Activated CD4-positive, alpha-beta T cell treated with anti-CD3 and anti-CD28 coated beads, Interleukin-2, amount 10 ng/mL, durations not matched to agents 24 days and 14 days (primary cell): ENCODE measurements at regions of chr7 and their contacts with region 1.

Region 1: DNA sequence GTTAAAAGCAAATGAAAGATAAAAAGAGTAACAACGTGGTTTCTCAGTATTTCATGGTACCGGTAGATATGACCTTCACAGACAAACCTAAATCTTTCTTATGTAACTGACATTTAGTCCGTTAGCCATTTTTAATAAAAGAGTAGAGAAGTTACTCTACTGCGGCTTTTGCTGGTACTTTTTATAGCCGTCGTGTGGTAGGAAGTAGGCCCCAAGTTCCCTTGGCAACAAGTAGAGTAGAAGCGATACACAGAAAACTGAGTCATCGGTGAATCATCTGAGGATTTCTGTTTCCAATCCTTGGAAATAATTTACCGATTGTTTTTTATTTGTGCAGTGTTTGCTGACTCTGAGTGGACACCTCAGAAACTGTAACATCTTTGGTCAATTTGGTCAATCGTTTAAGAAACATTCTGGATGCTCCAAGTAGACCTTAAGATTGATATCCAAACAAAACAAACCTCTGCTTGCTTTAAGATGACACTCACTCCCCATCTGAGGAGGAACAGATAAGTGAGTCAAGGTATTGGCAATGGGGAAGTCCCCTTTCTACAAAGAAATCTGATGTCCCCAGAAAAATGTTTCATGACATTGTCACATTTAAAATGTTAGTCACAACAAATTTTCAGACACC is 63.9 kb upstream of the AHR start:
- DNase-seq: peak; percentile 91
- H3K4me3 Mint-ChIP-seq: peak overlapping the region; percentile 81
- H3K27ac Mint-ChIP-seq: peak overlapping the region; percentile 97
- H3K4me1 Mint-ChIP-seq: peaks cover 35% of the 10 kb centered on the region
- H3K27me3 Mint-ChIP-seq: no peaks in the 10 kb centered on the region

Region 2: DNA sequence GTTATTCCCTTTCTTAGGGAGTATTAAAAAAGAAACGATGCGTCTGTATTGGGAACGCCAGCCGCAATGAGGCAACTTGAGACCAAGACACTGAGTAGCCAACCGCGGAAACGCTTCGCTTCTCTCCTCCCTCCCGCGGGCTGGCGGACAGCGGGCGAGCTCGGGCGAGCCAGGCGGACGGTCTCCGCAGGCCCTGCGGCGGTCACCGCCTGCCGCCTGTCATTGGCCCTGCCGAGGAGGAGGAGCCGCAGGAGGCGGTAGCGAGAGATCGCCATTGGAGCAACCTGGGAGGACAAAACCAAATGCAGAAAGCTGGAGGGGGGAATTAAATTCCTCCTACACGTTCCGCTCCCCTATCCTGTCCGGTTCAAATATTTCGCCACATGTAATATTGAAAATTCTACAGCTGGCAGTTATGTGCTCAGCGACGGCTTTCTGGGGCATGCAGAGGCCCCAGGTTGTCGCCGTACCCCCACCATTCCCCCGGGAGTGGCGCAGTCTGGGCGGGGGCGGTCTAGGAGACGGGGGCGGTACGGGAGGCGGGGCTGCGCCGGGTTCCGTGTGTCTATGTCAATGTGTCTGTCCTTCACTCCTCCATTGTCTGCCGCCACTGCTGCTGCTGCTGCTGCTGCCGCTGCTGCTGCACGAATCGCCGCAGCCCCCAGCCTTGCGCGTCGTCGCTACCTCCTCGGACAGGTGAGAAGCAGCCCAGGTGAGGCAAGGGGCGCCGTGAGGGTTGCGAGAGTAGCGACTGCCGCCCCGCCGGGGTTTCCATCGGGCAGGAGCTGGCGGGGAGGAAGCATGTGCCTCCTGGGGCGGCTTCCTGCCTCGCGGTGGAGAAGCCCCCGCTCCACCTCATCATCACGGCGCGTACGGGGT is 588.7 kb before region 1 on chr7 and contains the starts of genes ANKMY2 and BZW2:
- intact Hi-C with region 1: loop called (anchors 1 kb)
- DNase-seq: peak; percentile 98
- H3K4me3 Mint-ChIP-seq: peak within 1 kb of the TSS; percentile 93
- H3K27ac Mint-ChIP-seq: peak within 1 kb of the TSS; percentile 99
- H3K4me1 Mint-ChIP-seq: peaks cover 54% of the 10 kb centered on the region
- H3K27me3 Mint-ChIP-seq: no peaks in the 10 kb centered on the region
- total RNA-seq, gene ANKMY2: 8.0 and 8.7 TPM in 2 replicates
- total RNA-seq, gene BZW2: 104 and 113 TPM in 2 replicates

Region 3: GRCh38 chr7:16999541-17000267 is 234.8 kb before region 1 on chr7:
- intact Hi-C with region 1: loop called (anchors 1 kb)
- DNase-seq: peak; percentile 76
- H3K4me3 Mint-ChIP-seq: peak overlapping the region; percentile 63
- H3K27ac Mint-ChIP-seq: peak overlapping the region; percentile 84
- H3K4me1 Mint-ChIP-seq: peaks cover 15% of the 10 kb centered on the region
- H3K27me3 Mint-ChIP-seq: peaks cover 6% of the 10 kb centered on the region

Region 4: DNA sequence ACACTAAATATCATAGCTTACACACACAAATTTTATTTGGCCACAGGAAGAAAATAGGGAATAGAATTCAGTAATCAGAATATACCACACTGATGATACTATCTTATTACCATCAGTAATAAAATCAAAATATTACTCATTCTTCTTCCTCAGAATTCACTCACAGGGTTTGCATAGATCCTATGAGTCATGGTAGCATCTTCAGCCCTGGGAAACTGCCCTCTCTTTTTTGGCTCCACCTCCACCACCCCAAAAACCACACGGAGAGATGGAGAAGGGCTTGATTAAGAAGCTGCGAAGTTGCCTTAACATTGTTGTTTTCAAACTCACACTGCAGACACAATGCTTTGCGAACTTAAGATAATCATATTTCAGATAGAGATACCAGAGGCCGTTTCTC is 90.2 kb before region 1 on chr7:
- intact Hi-C with region 1: loop called (anchors 1 kb)
- DNase-seq: peak; percentile 87
- H3K4me3 Mint-ChIP-seq: peak overlapping the region; percentile 54
- H3K27ac Mint-ChIP-seq: peak overlapping the region; percentile 81
- H3K4me1 Mint-ChIP-seq: peaks cover 49% of the 10 kb centered on the region
- H3K27me3 Mint-ChIP-seq: peaks cover 2% of the 10 kb centered on the region

Region 5: GRCh38 chr7:17255926-17256325 is 21.4 kb after region 1 on chr7:
- intact Hi-C with region 1: loop called (anchors 1 kb)
- DNase-seq: no peak
- H3K4me3 Mint-ChIP-seq: no peak overlapping the region
- H3K27ac Mint-ChIP-seq: no peak overlapping the region
- H3K4me1 Mint-ChIP-seq: peaks cover 8% of the 10 kb centered on the region
- H3K27me3 Mint-ChIP-seq: no peaks in the 10 kb centered on the region

Region 6: GRCh38 chr7:17304926-17305325 is 70.4 kb after region 1 on chr7:
- intact Hi-C with region 1: loop called (anchors 1 kb)
- DNase-seq: peak; percentile 64
- H3K4me3 Mint-ChIP-seq: peak overlapping the region; percentile 21
- H3K27ac Mint-ChIP-seq: peak overlapping the region; percentile 30
- H3K4me1 Mint-ChIP-seq: peaks cover 22% of the 10 kb centered on the region
- H3K27me3 Mint-ChIP-seq: no peaks in the 10 kb centered on the region